Ovary (tissue), 10 donors: ENCODE measurements at regions of chr7 and their contacts with region 1.

Region 1: GRCh38 chr7:122528879-122529481 is 169.9 kb downstream of the RNF133 start:
- DNase-seq: no peak
- H3K4me3 ChIP-seq: no peak overlapping the region
- H3K27ac ChIP-seq: no peak overlapping the region
- H3K4me1 ChIP-seq: no peaks in the 10 kb centered on the region
- H3K27me3 ChIP-seq: no peaks in the 10 kb centered on the region
- CTCF ChIP-seq: peak in 2 of 3 donors; percentile 10 to 25
- EP300 ChIP-seq: no peak
- POLR2A ChIP-seq: no peak

Region 2: DNA sequence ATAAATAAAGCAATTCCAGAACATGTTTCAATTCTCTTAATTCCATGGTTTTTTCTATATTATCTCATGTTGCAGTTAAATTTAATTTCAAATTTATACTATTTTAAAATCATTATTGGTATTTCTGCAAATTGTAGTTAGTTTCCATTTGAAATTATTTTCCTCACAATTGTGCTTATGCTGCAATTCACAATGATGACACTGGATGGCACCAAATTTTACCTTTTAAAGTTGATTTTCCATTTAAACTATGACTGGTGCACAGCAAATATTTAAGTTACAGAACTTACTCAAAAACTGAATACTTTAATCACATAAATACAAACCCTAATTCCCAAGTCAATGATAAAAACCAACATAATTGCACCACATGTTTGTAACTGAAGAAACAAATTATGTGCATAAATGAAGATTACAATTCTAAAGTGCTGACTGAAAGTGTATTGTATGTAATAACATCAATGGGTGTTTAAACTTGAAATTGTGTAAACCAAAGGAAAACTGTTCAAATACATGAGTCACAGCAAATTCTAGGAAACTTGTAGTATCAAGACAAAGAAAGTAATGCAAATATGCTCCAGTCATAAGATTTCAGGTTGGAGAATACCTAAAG is 309.6 kb before region 1 on chr7:
- intact Hi-C with region 1: loop called in 2 of 4 experiments (anchors 5 kb)
- DNase-seq: no peak
- H3K4me3 ChIP-seq: no peak overlapping the region
- H3K27ac ChIP-seq: no peak overlapping the region
- H3K4me1 ChIP-seq: no peaks in the 10 kb centered on the region
- H3K27me3 ChIP-seq: no peaks in the 10 kb centered on the region
- CTCF ChIP-seq: peak in 2 of 3 donors; percentile 27 to 31
- EP300 ChIP-seq: no peak
- POLR2A ChIP-seq: no peak

Region 3: GRCh38 chr7:122412883-122413282 is 116.1 kb before region 1 on chr7:
- intact Hi-C with region 1: no loop called
- DNase-seq: peak in 4 of 5 donors; percentile 14 to 47 (median 26)
- H3K4me3 ChIP-seq: no peak overlapping the region
- H3K27ac ChIP-seq: no peak overlapping the region
- H3K4me1 ChIP-seq: peaks cover 3% of the 10 kb centered on the region
- H3K27me3 ChIP-seq: no peaks in the 10 kb centered on the region
- CTCF ChIP-seq: no peak
- EP300 ChIP-seq: no peak
- POLR2A ChIP-seq: no peak

Region 4: DNA sequence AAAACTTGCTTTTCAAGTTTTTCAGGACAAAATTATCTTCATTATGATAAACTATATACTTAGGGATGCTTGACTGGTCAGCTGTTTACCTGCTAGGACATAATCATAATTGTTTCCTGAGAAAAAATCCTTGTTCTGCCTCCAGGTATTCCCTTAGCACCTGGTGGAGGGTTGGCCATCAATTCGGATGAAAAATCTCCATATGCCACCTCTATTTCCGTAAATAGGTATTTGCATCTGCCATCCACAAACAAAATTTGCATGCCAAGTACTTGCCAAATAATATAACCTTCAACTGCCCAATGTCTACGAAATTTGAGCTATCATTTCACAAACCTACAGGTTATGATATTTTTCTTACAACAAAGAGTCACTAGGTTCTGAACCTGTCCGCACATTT is 43.7 kb after region 1 on chr7:
- intact Hi-C with region 1: no loop called
- DNase-seq: no peak
- H3K4me3 ChIP-seq: no peak overlapping the region
- H3K27ac ChIP-seq: no peak overlapping the region
- H3K4me1 ChIP-seq: no peaks in the 10 kb centered on the region
- H3K27me3 ChIP-seq: no peaks in the 10 kb centered on the region
- CTCF ChIP-seq: no peak
- EP300 ChIP-seq: no peak
- POLR2A ChIP-seq: no peak